ENCODE measurements at regions of chr1 and their contacts with region 1.

Region 1: DNA sequence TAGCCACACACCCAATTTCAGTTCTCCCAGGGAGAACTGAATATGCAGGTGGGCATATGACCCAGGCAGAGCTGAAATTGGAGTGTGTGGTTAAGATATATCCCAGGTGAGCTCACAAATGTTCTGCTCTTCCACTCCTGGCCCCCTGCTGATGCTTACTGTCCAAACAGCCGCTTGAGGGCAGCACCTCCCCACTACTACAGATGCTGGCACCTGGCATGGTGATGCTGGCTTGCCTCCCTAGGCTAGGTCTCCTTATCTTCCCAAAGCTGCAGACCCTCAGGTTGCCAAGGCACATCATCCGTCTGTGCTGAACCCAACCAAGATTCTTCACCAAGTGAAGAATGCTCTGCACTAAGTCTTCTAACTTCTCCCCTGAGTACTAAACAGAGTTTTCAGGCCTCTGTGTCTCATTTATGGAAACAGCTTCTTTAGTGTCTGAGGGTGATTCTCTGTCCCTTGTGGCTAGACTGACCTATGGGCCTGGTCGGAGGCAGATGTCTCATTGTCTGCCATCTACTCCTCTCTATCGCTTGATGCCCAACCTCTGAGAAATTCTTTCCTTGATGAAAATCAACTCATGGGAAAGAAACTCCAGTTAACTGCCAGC is 27.2 kb downstream of the XCL1 start:
- DNase-seq: peak; percentile 53
- H3K4me3 ChIP-seq: no peak overlapping the region
- H3K27ac ChIP-seq: no peak overlapping the region
- H3K4me1 ChIP-seq: no peaks in the 10 kb centered on the region
- H3K27me3 ChIP-seq: no peaks in the 10 kb centered on the region
- CTCF ChIP-seq: peak; percentile 89 to 93

Region 2: DNA sequence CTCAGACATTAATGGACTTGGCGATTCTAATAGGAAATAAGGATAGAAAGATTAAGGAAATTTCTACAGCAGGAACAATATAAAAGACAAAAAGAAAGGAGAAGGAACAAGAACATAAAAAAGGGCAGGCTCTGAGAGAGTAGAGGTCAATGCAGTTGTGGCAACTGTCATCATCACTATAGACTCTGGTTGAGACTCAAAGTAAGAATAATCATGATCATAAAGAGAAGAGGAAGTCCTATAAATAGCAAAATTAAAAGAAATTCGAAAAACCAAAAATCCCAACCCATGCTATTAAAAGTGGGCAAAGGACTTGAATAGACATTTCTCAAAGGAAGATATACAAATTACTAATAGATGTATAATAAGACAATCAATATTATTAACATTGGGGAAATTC is 41.6 kb before region 1 on chr1:
- CTCF ChIA-PET with region 1: no interaction called
- dilution Hi-C with region 1: no loop called
- in situ Hi-C with region 1: no loop called
- intact Hi-C with region 1: no loop called
- DNase-seq: no peak
- H3K4me3 ChIP-seq: no peak overlapping the region
- H3K27ac ChIP-seq: no peak overlapping the region
- H3K4me1 ChIP-seq: no peaks in the 10 kb centered on the region
- H3K27me3 ChIP-seq: peaks cover 6% of the 10 kb centered on the region
- CTCF ChIP-seq: no peak

Region 3: DNA sequence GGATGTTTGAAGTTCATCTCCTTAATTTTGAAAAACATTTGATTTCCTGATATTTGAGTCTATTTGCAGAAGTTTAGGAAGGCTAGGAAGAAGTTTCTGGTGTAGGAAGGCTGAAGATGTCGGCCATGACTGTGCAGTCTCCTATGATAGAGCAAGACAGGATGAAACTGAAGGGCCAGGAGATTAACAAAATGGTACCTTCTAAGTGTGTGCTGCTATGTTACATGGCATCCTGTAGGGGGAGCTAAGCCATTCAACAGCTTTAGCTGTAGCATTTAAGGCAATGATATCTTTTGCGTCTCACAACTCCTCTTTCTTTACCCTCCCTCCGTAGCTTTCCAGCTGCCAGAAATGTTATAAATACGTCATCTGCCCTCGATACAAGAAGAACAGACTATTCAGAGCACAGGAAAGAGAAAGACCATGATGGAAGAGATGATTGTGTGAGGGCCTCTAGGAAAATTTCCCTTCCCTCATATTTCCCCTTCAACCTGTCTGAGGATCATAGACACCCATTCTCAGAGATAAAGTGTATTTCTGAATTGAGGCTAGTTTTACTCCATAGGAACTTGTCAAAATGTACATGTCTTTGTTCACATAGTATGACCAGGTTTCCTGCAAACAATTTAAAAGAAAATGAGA is 33.9 kb after region 1 on chr1:
- CTCF ChIA-PET with region 1: interaction called, 4 read pairs
- dilution Hi-C with region 1: no loop called
- in situ Hi-C with region 1: no loop called
- intact Hi-C with region 1: loop called (anchors 1 kb)
- DNase-seq: peak; percentile 39
- H3K4me3 ChIP-seq: no peak overlapping the region
- H3K27ac ChIP-seq: peak overlapping the region; percentile 95
- H3K4me1 ChIP-seq: peaks cover 26% of the 10 kb centered on the region
- H3K27me3 ChIP-seq: no peaks in the 10 kb centered on the region
- CTCF ChIP-seq: peak; percentile 79 to 84

Region 4: GRCh38 chr1:169106095-169106920 is 502.7 kb after region 1 on chr1 and contains the start of gene ATP1B1:
- CTCF ChIA-PET with region 1: no interaction called
- dilution Hi-C with region 1: no loop called
- in situ Hi-C with region 1: no loop called
- intact Hi-C with region 1: loop called (anchors 1 kb)
- DNase-seq: peak; percentile 88
- H3K4me3 ChIP-seq: peak within 1 kb of the TSS; percentile 84 to 89 (median 88)
- H3K27ac ChIP-seq: peak within 1 kb of the TSS; percentile 98
- H3K4me1 ChIP-seq: peaks cover 53% of the 10 kb centered on the region
- H3K27me3 ChIP-seq: no peaks in the 10 kb centered on the region
- CTCF ChIP-seq: peak in 1 of 2 donors; percentile 44
- total RNA-seq, gene ATP1B1: 53.2 to 117 TPM

Region 5: DNA sequence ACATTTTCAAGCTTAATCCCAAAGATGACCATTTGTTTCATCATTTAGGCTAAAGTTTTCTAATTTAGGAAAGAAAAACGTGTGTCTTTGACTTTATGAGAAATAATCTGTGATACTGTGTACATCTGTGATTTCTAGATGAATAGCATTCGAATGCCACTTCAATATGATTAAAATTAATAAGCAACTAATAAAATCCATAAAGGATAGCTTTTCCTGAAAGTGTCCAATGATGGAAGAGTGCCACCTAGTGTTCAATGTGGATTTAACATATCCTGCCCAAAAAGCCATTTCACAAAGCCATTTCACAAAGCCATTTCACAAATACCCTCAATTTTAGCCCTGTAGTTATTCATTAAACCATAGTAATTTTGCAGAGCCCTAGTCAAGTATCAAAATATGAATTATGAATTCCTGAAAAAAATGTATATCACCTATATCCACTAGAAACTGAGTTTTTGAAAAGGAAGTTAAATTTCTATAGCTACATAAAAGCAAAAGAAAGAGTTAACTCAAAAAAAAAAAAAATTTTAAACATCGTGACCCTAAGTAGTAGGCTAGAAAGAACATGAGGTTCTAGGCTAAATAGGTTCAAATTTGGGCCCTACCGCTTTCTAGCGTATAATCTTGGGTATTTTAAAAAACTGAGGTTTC is 744.9 kb after region 1 on chr1:
- CTCF ChIA-PET with region 1: interaction called, 23 read pairs
- dilution Hi-C with region 1: no loop called
- in situ Hi-C with region 1: loop called (anchors 10 kb)
- intact Hi-C with region 1: loop called (anchors 1 kb)
- DNase-seq: peak; percentile 32
- H3K4me3 ChIP-seq: no peak overlapping the region
- H3K27ac ChIP-seq: no peak overlapping the region
- H3K4me1 ChIP-seq: no peaks in the 10 kb centered on the region
- H3K27me3 ChIP-seq: no peaks in the 10 kb centered on the region
- CTCF ChIP-seq: peak; percentile 55 to 73

Region 6: DNA sequence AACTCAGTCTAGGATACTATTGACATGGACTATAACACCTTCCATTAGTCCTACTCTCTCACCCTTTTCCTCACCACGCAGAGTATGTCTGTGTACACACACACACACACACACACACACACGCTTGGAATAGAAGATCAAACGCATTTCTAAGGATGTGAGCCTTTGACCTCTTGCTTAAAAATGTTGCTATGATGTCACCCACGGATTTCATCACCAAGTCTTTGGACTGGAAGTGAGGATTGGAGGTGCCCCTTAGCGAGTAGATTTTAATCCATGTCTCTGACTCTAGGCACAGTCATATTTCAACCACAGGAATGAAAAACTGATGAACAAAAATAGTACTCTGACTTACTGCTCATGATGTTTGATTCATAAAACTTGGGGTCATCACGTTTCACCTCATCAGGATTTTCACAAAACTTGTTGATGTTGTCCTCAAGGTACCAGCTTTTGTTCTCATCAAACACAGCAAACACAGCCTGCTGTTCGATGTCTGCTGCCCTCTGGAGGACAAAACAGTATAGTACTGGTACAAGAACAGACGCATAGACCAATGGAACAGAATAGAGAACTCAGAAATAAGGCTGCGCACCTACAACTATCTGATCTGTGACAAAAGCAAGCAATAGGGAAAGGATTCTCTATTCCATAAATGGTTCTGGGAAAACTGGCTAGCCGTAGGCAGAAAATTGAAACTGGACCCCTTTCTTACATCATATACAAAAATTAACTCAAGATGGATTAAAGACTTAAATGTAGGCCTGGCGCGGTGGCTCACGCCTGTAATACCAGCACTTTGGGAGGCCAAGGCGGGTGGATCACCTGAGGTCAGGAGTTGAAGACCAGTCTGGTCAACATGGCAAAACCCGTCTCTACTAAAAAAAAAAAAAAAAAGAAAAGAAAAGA is 942.7 kb after region 1 on chr1:
- CTCF ChIA-PET with region 1: no interaction called
- dilution Hi-C with region 1: no loop called
- in situ Hi-C with region 1: loop called (anchors 10 kb)
- intact Hi-C with region 1: loop called (anchors 1 kb)
- DNase-seq: peak; percentile 59
- H3K4me3 ChIP-seq: no peak overlapping the region
- H3K27ac ChIP-seq: no peak overlapping the region
- H3K4me1 ChIP-seq: no peaks in the 10 kb centered on the region
- H3K27me3 ChIP-seq: no peaks in the 10 kb centered on the region
- CTCF ChIP-seq: peak; percentile 76 to 85

Region 7: DNA sequence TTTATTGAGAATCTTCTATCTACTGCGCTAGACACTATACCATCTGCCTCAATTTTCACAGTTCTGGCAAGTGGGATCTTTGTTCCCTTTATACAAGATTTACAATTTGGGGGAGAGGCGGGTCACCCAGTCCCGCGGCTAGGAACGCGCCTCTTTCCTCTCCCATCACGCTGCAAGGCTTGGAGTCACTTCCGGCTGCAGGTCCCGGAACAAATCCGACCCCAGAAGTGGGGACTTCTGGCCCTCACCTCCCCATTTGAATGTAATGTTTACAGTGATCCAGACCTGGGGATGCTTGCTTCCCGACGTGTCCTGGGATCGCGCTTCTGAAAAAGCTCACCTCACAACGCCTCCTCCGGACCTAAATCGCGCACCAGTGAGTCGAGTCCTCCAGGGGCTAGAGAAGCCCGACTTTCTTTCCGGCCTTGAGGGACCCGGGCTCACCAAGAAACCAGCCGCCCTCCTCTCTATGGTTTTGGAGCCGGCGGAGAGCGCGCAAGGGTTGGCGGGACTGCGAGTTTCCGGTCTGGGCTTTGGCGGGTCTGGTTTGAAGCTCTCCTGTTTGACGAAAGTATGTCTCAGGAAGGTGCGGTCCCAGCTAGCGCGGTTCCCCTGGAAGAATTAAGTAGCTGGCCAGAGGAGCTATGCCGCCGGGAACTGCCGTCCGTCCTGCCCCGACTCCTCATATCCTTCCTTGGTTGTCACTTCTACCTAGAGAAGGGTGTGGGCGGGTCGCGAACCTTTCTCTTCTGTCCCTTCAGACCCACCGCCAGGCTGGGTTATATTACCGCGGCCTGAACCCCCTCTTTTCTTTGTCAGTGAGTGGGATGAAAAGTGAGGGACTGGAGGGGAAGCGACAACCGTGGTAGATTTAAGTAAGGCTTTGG is 1191.2 kb after region 1 on chr1 and contains the start of gene METTL18:
- CTCF ChIA-PET with region 1: no interaction called
- dilution Hi-C with region 1: no loop called
- in situ Hi-C with region 1: no loop called
- intact Hi-C with region 1: loop called (anchors 5 kb)
- DNase-seq: peak; percentile 95
- H3K4me3 ChIP-seq: peak within 1 kb of the TSS; percentile 68 to 73 (median 72)
- H3K27ac ChIP-seq: peak within 1 kb of the TSS; percentile 79
- H3K4me1 ChIP-seq: peaks cover 8% of the 10 kb centered on the region
- H3K27me3 ChIP-seq: no peaks in the 10 kb centered on the region
- CTCF ChIP-seq: no peak
- total RNA-seq, gene METTL18: 4.3 to 6.0 TPM

Measured in mammary epithelial cell (primary cell).